Esophagus squamous epithelium (tissue), 5 donors: ENCODE measurements at regions of chr3 and their contacts with region 1.

Region 1: GRCh38 chr3:45516829-45517228 is 77.7 kb upstream of the LIMD1 start:
- DNase-seq: no peak
- H3K4me3 ChIP-seq: no peak overlapping the region
- H3K27ac ChIP-seq: no peak overlapping the region
- H3K4me1 ChIP-seq: peaks cover 0 to under 1% (median 0%) of the 10 kb centered on the region in 3 donors
- H3K27me3 ChIP-seq: no peaks in the 10 kb centered on the region
- CTCF ChIP-seq: no peak
- POLR2A ChIP-seq: no peak

Region 2: DNA sequence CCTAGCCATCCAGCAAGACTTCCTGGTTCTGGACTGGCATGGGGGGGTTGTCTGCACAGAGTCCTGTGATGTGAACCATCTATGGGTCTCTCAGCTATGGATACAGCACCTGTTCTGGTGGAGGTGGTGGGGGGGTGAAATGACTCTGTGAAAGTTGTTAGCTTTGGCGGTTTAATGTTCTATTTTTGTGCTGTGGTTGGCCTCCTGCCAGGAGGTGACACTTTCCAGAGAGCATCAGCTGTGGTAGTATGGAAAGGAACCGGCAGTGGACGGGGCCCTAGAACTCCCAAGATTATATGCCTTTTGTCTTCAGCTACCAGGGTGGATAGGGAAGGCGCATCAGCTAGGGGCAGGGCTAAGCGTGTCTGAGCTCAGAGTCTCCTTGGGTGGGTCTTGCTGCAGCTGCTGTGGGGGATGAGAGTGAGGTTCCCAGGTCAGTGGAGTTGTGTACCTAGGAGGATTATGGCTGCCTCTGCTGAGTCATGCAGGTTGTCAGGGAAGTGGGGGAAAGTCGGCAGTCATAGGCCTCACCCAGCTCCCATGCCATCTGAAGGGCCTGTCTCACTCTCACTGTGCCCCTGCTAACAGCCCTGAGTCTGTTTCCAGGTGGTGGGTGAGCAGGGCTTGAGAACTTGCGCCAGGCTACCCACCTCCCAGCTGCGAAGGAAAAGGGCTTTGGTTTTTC is 135.5 kb before region 1 on chr3:
- intact Hi-C with region 1: no loop called
- DNase-seq: no peak
- H3K4me3 ChIP-seq: no peak overlapping the region
- H3K27ac ChIP-seq: peak overlapping the region in 3 of 4 donors; percentile 73 to 79 (median 75)
- H3K4me1 ChIP-seq: peaks cover 4 to 20% (median 9%) of the 10 kb centered on the region in 3 donors
- H3K27me3 ChIP-seq: no peaks in the 10 kb centered on the region
- CTCF ChIP-seq: no peak
- POLR2A ChIP-seq: no peak

Region 3: GRCh38 chr3:45479621-45480035 is 37.2 kb before region 1 on chr3:
- intact Hi-C with region 1: no loop called
- DNase-seq: no peak
- H3K4me3 ChIP-seq: no peak overlapping the region
- H3K27ac ChIP-seq: no peak overlapping the region
- H3K4me1 ChIP-seq: peaks cover 0 to 8% (median 0%) of the 10 kb centered on the region in 3 donors
- H3K27me3 ChIP-seq: no peaks in the 10 kb centered on the region
- CTCF ChIP-seq: no peak
- POLR2A ChIP-seq: no peak

Region 4: DNA sequence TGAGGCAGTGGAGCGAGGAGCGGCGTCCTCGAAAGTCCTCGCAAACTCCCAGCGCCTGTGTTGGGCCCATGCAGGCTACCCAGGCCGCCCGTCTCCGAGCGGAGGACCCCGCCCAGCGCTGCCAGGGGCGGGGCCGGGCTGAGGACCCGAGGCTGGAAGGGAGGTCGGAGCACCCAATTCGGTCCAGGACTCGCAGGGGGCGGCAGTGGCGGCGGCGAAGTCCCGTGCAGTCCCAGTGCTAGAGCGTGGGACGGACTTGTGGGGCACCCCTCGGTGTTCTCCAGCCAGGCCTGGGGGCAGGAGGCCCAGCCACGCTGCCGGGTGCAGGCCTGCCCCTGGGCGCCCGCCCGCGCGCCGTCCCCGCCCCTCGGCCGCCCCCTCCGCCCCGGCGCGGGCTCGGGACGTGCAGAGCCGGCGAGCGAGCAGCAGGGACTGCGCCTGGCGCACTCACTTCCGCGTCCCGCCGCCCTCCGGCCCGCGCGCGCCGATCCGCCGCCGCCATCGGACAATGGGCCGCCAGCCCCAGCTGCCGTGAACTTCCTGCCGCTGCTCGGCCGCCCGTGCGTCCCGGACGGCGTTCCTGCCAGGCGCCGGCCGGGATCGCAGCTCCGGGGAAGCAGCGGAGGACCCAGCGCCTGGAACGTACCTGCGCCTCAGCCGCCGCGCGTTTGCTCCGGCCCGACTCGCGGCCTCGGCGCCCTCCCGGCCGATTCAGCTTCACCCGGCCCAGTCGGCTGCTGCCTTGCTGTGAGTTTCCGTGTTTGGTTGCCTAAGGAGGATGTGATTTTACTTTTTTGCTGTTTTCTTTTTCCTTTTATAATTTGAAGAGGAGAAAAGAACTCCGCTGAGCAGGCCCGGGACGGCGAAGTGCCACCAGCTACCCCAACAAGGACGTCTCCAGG is 77.1 kb after region 1 on chr3:
- intact Hi-C with region 1: loop called (anchors 10 kb)
- DNase-seq: no peak
- H3K4me3 ChIP-seq: peak overlapping the region; percentile 54 to 94 (median 58)
- H3K27ac ChIP-seq: peak overlapping the region; percentile 83 to 95 (median 90)
- H3K4me1 ChIP-seq: peaks cover 47 to 62% (median 51%) of the 10 kb centered on the region in 3 donors
- H3K27me3 ChIP-seq: no peaks in the 10 kb centered on the region
- CTCF ChIP-seq: peak in 2 of 6 experiments; percentile 10 to 12
- POLR2A ChIP-seq: peak in 2 of 4 donors; percentile 49 to 72